Adrenal gland (tissue), 19 donors: ENCODE measurements at regions of chr17 and their contacts with region 1.

Region 1: DNA sequence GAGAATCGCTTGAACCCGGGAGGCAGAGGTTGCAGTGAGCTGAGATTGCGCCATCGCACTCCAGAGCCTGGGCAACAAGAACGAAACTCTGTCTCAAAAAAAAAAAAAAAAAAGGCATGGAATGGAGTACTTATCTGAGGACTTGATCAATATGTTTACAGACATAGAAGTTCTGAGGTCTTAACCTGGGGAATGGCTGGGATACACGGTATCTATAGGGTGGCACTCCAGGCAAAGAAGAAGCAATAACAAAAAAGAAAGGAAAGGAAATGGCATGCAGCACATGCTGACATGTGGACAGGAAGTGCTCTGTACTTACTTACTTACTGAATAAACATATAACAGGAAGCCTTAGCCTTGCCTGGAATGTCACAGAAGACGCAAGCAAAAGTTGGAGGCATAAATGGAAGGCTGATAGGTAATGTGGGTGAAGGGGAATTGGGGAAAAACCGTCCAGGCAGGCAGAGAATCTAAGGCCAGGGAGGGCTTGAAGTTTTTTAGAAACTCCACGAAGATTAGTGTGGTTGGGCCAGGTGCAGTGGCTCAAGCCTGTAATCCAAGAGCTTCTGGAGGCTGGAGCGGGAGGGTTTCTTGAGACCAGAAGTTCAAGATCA is 10.1 kb upstream of the SPOP start:
- DNase-seq: no peak
- H3K4me3 ChIP-seq: no peak overlapping the region
- H3K27ac ChIP-seq: peak overlapping the region in 3 of 5 donors; percentile 22 to 62 (median 30)
- H3K4me1 ChIP-seq: peaks cover 0 to 4% of the 10 kb centered on the region in 2 donors
- H3K27me3 ChIP-seq: no peaks in the 10 kb centered on the region
- CTCF ChIP-seq: no peak
- POLR2A ChIP-seq: no peak

Region 2: DNA sequence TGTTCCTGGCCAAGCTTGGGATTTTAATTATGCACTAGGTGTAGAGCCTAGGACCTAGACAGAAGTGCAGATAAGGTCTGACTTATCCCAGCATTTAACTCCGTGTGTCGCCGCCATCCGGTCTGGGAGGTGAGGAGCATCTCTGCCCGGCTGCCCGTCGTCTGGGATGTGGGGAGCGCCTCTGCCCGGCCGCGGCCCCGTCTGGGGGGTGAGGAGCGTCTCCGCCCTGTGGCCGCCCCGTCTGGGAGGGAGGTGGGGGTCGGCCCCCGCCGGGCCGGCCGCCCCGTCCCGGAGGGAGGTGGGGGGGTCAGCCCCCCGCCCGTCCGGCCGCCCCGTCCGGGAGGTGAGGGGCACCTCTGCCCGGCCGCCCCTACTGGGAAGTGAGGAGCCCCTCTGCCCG is 562.5 kb before region 1 on chr17:
- intact Hi-C with region 1: no loop called
- DNase-seq: no peak
- H3K4me3 ChIP-seq: no peak overlapping the region
- H3K27ac ChIP-seq: no peak overlapping the region
- H3K4me1 ChIP-seq: no peaks in the 10 kb centered on the region
- H3K27me3 ChIP-seq: no peaks in the 10 kb centered on the region
- CTCF ChIP-seq: no peak
- POLR2A ChIP-seq: no peak

Region 3: GRCh38 chr17:49624896-49625295 is 63.1 kb before region 1 on chr17:
- intact Hi-C with region 1: loop called in 1 of 2 experiments (anchors 10 kb)
- DNase-seq: peak in 3 of 7 donors; percentile 38 to 50 (median 44)
- H3K4me3 ChIP-seq: no peak overlapping the region
- H3K27ac ChIP-seq: no peak overlapping the region
- H3K4me1 ChIP-seq: peaks cover 0 to 33% of the 10 kb centered on the region in 2 donors
- H3K27me3 ChIP-seq: no peaks in the 10 kb centered on the region
- CTCF ChIP-seq: no peak
- POLR2A ChIP-seq: no peak